ENCODE measurements at regions of chr9 and their contacts with region 1.

Region 1: GRCh38 chr9:89536145-89536574 is 38.2 kb upstream of the SEMA4D start:
- DNase-seq: peak; percentile 33
- H3K4me3 Mint-ChIP-seq: peak overlapping the region; percentile 62
- H3K27ac Mint-ChIP-seq: peak overlapping the region; percentile 87
- H3K4me1 Mint-ChIP-seq: peaks cover 75% of the 10 kb centered on the region
- H3K27me3 Mint-ChIP-seq: no peaks in the 10 kb centered on the region

Region 2: GRCh38 chr9:89410641-89411350 is 125.4 kb before region 1 on chr9:
- intact Hi-C with region 1: loop called (anchors 1 kb)
- DNase-seq: no peak
- H3K4me3 Mint-ChIP-seq: peak overlapping the region; percentile 64
- H3K27ac Mint-ChIP-seq: peak overlapping the region; percentile 95
- H3K4me1 Mint-ChIP-seq: peaks cover 84% of the 10 kb centered on the region
- H3K27me3 Mint-ChIP-seq: no peaks in the 10 kb centered on the region

Region 3: DNA sequence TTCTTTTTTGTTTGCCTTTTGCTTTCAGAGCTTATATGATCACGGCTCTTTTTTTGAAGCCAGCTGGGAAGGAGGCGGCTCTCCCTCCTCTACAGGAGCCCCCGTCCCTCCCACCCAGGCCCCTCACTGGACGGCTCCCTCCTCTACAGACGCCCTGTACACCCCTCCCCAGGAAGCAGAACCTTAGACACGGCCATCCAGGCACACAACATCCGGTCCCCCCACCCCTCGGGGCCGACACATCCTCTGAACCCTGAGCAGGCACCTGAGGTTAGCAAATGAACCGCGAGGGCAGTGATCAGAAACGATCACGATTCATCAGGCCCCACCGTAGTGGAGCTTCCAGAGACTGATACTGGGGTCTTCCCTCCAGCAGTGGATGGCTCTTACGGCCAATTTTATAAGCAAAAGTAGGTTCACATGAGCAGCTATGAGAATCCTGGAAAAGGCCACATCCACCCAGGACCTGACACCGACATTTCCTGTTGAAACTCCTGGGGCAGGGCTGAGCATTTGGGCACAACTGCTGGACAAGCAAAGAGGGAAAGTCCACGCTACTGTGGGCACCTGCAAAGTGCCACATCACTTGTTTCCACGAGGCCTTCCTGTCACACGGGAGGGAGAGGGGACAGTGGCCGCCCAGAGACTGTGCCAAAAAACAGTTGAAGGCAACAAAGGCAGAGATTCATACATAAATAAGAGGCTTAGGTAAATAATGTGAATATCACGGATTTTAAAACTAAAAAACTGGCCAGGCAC is 117.1 kb before region 1 on chr9:
- intact Hi-C with region 1: loop called (anchors 1 kb)
- DNase-seq: peak; percentile 72
- H3K4me3 Mint-ChIP-seq: peak overlapping the region; percentile 81
- H3K27ac Mint-ChIP-seq: peak overlapping the region; percentile 90
- H3K4me1 Mint-ChIP-seq: peaks cover 82% of the 10 kb centered on the region
- H3K27me3 Mint-ChIP-seq: no peaks in the 10 kb centered on the region

Region 4: DNA sequence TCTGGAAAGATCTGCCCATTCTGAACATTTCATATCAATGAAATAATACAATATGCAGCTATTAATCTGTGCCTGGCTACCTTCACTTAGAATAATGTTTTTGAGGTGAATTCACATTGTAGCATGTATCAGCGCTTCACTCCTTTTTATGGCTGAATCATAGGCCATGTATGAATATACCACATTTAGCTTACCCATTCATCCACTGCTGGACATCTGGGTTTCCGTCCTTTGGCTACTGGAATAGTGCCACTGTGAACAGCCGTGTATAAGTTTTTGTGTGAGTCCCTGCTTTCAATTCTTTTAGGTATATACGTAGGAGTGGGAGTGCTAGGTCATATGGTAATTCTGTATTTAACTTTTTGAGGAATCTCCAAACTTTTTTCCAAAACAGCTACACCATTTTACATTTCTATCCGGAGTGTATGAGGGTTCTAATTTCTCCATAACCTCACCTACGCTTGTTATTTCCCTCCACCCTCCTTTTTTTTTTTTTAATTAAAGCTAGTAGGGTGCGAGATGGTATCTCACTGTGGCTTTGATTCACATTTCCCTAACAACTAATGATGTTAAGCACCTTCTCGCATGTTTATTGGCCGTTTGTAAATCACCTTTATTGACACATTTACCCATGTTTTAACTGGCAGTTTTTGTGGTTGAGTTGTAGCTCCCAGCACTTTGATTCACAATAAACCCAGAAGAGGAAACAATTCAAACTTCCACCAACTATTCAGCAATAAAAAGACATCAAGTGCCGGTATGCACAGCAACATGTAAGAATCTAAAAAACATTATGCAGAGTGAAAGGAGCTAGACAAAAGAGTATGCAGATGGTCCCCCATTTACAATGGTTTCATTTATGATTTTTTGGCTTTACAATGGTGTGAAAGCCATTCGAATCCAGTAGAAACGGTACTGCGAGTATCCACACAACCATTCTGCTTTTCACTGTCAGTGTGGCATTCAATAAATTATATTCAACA is 46.3 kb before region 1 on chr9:
- intact Hi-C with region 1: loop called (anchors 2 kb)
- DNase-seq: no peak
- H3K4me3 Mint-ChIP-seq: peak overlapping the region; percentile 70
- H3K27ac Mint-ChIP-seq: peak overlapping the region; percentile 88
- H3K4me1 Mint-ChIP-seq: peaks cover 85% of the 10 kb centered on the region
- H3K27me3 Mint-ChIP-seq: no peaks in the 10 kb centered on the region

Region 5: GRCh38 chr9:89522261-89522958 is 13.8 kb before region 1 on chr9:
- intact Hi-C with region 1: loop called (anchors 1 kb)
- DNase-seq: peak; percentile 82
- H3K4me3 Mint-ChIP-seq: peak overlapping the region; percentile 71
- H3K27ac Mint-ChIP-seq: peak overlapping the region; percentile 100
- H3K4me1 Mint-ChIP-seq: peaks cover 85% of the 10 kb centered on the region
- H3K27me3 Mint-ChIP-seq: no peaks in the 10 kb centered on the region

Measured in activated T-helper 2 cell treated with anti-CD3 and anti-CD28 coated beads, Interferon-gamma antibody, Interleukin-2, Interleukin-4, amounts not matched to agents 10 μg/mL and 5 μg/mL and 100 μg/mL, durations not matched to agents 14 hours and 24 hours and 36 hours (primary cell).